Activated B cell treated with CpG ODN at 0.5 μM for 24 hours (primary cell): ENCODE measurements at regions of chr11 and their contacts with region 1.

Region 1: DNA sequence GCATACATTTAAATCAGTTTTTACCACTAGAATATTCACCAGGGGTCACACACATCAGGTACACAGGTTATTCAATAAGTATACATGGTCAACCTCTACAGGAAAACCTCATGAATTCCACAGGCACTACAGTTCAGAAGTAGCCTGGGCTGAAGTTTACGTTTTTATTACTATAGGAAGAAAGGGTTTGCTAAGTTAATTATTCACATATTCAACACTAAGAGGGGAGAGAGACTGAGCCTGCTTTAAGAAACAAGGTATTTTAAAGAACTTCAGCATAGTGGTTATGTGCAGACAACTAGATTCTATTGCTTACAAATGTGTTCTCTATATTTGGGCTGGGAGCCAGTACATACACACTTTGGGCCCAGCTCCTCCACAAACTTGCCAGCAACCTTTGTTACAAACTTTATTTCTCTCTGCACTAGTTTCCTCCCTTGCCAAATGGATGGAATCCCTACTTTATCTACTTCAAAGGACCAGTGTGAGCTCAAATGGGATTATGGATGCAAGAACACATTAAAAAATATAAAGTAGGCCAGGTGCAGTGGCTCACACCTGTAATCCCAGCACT is 31.9 kb downstream of the IL18BP start:
- DNase-seq: no peak
- ATAC-seq: no peak
- H3K4me3 Mint-ChIP-seq: no peak overlapping the region
- H3K27ac Mint-ChIP-seq: peak overlapping the region; percentile 41
- H3K4me1 Mint-ChIP-seq: peaks cover 22% of the 10 kb centered on the region
- H3K27me3 Mint-ChIP-seq: no peaks in the 10 kb centered on the region
- CTCF ChIP-seq: no peak

Region 2: DNA sequence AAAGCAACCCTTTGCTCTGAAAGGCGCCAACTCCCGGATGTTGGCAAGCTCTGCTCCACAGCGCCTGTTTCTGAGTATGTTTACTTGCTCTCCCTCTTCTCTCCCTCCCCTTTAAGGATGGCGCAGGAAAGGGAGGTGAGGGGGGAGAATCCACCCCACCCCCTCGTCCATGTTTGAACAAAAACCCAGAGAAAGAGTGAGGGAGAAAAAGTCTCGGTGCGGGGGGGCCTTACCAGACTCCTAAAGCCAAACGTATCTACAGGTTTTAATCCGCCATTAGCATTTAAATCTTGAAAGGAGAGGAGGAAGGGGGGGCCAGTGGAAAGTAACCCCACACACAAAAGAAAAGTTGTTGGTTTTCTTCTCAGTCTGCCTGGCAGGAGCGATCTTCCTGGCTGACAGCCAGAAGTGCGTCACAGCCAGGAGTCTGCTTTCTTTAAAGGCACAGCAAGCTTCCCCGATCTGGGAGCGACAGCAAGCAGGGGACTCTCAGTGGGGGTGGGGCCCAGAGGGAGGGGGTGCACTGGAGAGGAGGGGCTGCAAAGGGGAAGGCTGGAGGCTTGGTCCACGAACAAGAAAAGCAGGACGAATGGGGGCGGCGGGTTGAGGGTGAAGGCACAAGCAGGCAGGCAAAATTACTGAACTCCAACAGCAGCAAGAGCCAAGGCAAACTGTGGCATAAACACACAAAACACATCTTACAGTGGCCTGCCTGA is 10.3 kb after region 1 on chr11:
- CTCF ChIA-PET with region 1: interaction called, 37 read pairs
- POLR2A ChIA-PET with region 1: interaction called, 10 read pairs
- intact Hi-C with region 1: no loop called
- DNase-seq: peak; percentile 49
- ATAC-seq: peak; percentile 48
- H3K4me3 Mint-ChIP-seq: no peak overlapping the region
- H3K27ac Mint-ChIP-seq: no peak overlapping the region
- H3K4me1 Mint-ChIP-seq: peaks cover 2% of the 10 kb centered on the region
- H3K27me3 Mint-ChIP-seq: no peaks in the 10 kb centered on the region
- CTCF ChIP-seq: no peak

Region 3: GRCh38 chr11:72080256-72080974 is 49.9 kb after region 1 on chr11 and contains the starts of genes LRRC51 and NUMA1:
- CTCF ChIA-PET with region 1: interaction called, 13 read pairs
- POLR2A ChIA-PET with region 1: interaction called, 3 read pairs
- intact Hi-C with region 1: loop called (anchors 1 kb)
- DNase-seq: peak; percentile 94
- ATAC-seq: peak; percentile 90
- H3K4me3 Mint-ChIP-seq: peak within 1 kb of the TSS; percentile 95
- H3K27ac Mint-ChIP-seq: peak within 1 kb of the TSS; percentile 91
- H3K4me1 Mint-ChIP-seq: peaks cover 35% of the 10 kb centered on the region
- H3K27me3 Mint-ChIP-seq: no peaks in the 10 kb centered on the region
- CTCF ChIP-seq: no peak
- total RNA-seq, gene LRRC51: 4.1 and 4.5 TPM in 2 replicates
- total RNA-seq, gene NUMA1: 146 and 163 TPM in 2 replicates

Region 4: GRCh38 chr11:72102946-72103753 is 72.6 kb after region 1 on chr11 and contains the start of gene LAMTOR1:
- CTCF ChIA-PET with region 1: interaction called, 22 read pairs
- POLR2A ChIA-PET with region 1: interaction called, 4 read pairs
- intact Hi-C with region 1: no loop called
- DNase-seq: peak; percentile 93
- ATAC-seq: peak; percentile 96
- H3K4me3 Mint-ChIP-seq: peak within 1 kb of the TSS; percentile 96
- H3K27ac Mint-ChIP-seq: peak within 1 kb of the TSS; percentile 93
- H3K4me1 Mint-ChIP-seq: peaks cover 46% of the 10 kb centered on the region
- H3K27me3 Mint-ChIP-seq: no peaks in the 10 kb centered on the region
- CTCF ChIP-seq: no peak
- total RNA-seq, gene LAMTOR1: 87.2 and 87.6 TPM in 2 replicates

Region 5: GRCh38 chr11:72179804-72180396 is 149.3 kb after region 1 on chr11:
- CTCF ChIA-PET with region 1: interaction called, 5 read pairs
- POLR2A ChIA-PET with region 1: no interaction called
- intact Hi-C with region 1: loop called (anchors 1 kb)
- DNase-seq: no peak
- ATAC-seq: no peak
- H3K4me3 Mint-ChIP-seq: no peak overlapping the region
- H3K27ac Mint-ChIP-seq: no peak overlapping the region
- H3K4me1 Mint-ChIP-seq: peaks cover 4% of the 10 kb centered on the region
- H3K27me3 Mint-ChIP-seq: peaks cover 22% of the 10 kb centered on the region
- CTCF ChIP-seq: no peak

Region 6: DNA sequence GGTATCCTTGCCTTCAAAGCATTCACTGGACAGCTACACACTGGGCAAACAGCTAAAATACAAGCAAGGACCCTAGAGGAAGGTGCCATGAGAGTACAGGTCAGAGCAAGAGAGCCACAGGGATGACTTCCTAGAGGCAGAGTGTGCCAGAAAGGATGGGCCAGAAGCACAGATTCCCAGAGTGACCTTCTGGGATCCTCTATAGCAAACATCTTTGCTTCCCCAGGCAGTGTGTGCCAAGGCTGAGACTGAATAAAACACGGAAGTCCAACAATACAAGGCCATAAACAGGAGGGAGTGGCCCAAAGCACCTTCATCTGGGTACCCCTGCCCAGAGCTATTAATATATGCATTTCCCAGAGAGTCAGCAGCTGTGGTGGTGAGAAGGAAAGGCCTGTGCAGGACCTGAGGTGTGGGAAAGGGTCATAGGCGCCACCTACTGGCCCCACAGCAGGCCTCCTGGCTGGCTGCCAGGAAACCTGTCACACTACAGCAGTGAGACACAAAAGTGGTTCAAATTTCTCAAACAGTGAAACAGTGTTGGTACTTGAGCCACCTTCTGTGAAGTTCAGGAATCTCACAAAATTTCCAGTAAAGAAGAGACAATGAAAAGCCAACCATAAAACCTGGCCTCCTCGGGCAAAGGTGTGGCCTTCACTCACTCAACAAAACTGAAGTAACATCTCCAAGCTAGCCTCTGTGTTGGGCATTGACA is 383.5 kb after region 1 on chr11:
- CTCF ChIA-PET with region 1: interaction called, 6 read pairs
- POLR2A ChIA-PET with region 1: no interaction called
- intact Hi-C with region 1: loop called (anchors 1 kb)
- DNase-seq: peak; percentile 64
- ATAC-seq: peak; percentile 37
- H3K4me3 Mint-ChIP-seq: no peak overlapping the region
- H3K27ac Mint-ChIP-seq: no peak overlapping the region
- H3K4me1 Mint-ChIP-seq: peaks cover 33% of the 10 kb centered on the region
- H3K27me3 Mint-ChIP-seq: no peaks in the 10 kb centered on the region
- CTCF ChIP-seq: no peak